ENCODE measurements at regions of chr21 and their contacts with region 1.

Region 1: GRCh38 chr21:39388038-39388810 is 39.3 kb upstream of the HMGN1 start:
- DNase-seq: peak; percentile 85
- ATAC-seq: peak; percentile 92
- H3K4me3 ChIP-seq: peak overlapping the region; percentile 70
- H3K27ac ChIP-seq: no peak overlapping the region
- H3K4me1 ChIP-seq: peaks cover 9% of the 10 kb centered on the region
- H3K27me3 ChIP-seq: no peaks in the 10 kb centered on the region
- CTCF ChIP-seq: peak; percentile 94

Region 2: DNA sequence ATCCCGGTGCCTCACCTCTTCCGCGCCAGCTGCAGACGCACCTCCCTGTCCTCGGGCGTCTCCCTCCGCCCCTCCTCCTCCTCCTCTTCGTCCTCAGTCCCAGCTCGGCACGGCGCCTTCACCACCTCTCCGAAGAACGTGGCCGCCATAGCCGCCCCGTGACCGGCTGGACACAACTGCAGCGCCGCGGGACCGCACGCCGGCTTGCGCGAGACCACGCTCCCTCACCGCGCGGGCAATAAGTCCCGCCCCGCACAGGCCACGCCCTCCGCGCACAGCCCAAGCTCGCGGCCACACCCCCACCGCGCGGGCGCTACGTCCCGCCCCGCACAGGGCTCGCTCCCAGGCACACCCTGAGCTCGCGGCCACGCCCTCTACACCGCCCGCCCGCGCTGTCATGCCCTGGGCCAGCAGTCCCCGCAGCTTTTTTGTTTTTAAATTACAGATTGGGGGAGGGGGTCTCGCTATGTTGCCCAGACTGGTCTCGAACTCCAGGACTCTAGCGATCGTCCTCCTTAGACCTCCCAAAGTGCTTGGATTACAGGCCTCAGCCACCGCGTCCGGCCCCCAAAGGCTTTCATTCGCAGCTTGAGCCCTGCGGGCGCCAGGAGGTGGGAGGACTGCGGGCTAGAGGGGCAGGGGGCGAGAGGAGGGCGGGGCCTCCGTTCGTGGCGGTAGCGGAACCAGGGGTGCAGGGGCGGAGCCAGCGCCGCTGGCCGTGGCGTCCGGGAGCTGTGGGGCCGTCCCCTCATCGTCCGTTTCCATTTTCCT is 204.8 kb before region 1 on chr21 and contains the start of gene PSMG1:
- CTCF ChIA-PET with region 1: no interaction called
- POLR2A ChIA-PET with region 1: no interaction called
- intact Hi-C with region 1: loop called (anchors 10 kb)
- DNase-seq: peak; percentile 96
- ATAC-seq: peak; percentile 89
- H3K4me3 ChIP-seq: peak within 1 kb of the TSS; percentile 85
- H3K27ac ChIP-seq: peak within 1 kb of the TSS; percentile 44
- H3K4me1 ChIP-seq: peaks cover 18% of the 10 kb centered on the region
- H3K27me3 ChIP-seq: no peaks in the 10 kb centered on the region
- CTCF ChIP-seq: no peak
- total RNA-seq, gene PSMG1: 110 and 113 TPM in 2 replicates

Region 3: DNA sequence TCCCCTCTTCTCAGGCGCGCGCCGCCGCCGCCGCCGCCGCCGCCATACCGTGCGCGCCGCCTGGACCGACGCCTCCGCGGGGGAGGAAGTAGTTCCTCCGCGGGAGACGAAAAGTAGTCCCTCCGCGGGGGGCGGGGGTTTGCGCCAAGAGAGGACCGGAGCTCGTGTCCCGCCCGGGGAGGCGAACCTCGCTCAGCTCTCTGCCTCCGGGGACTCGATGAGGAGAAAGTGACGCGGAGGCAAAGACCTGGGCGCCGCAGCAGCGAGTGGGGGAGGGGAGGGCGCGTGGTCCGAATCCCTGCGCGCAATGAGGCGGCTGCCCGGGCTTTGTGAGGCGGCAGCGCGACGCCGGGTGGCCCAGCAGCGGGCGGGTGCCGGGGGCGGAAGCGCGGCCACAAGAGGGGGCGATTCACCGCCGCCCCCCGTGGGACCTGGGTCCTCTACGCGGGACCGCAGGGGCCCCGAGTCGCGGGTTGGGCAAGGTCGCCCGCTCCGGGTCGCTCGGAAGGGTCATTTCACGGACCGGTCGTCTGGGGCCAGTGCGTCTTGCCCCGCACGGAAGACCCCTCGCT is 74.6 kb before region 1 on chr21 and contains the start of gene BRWD1:
- CTCF ChIA-PET with region 1: no interaction called
- POLR2A ChIA-PET with region 1: no interaction called
- intact Hi-C with region 1: loop called (anchors 2 kb)
- DNase-seq: peak; percentile 77
- ATAC-seq: peak; percentile 55
- H3K4me3 ChIP-seq: peak within 1 kb of the TSS; percentile 77
- H3K27ac ChIP-seq: peak within 1 kb of the TSS; percentile 71
- H3K4me1 ChIP-seq: peaks cover 20% of the 10 kb centered on the region
- H3K27me3 ChIP-seq: no peaks in the 10 kb centered on the region
- CTCF ChIP-seq: no peak
- total RNA-seq, gene BRWD1: 25.1 and 29.3 TPM in 2 replicates

Region 4: GRCh38 chr21:39373644-39374043 is 14.6 kb before region 1 on chr21:
- CTCF ChIA-PET with region 1: interaction called, 20 read pairs
- POLR2A ChIA-PET with region 1: interaction called, 3 read pairs
- intact Hi-C with region 1: loop called (anchors 1 kb)
- DNase-seq: peak; percentile 73
- ATAC-seq: peak; percentile 96
- H3K4me3 ChIP-seq: peak overlapping the region; percentile 31; the same call in 1 of the 2 replicates
- H3K27ac ChIP-seq: no peak overlapping the region
- H3K4me1 ChIP-seq: peaks cover 7% of the 10 kb centered on the region; the same call in 1 of the 2 replicates
- H3K27me3 ChIP-seq: no peaks in the 10 kb centered on the region
- CTCF ChIP-seq: peak; percentile 67

Region 5: GRCh38 chr21:39406065-39406464 is 17.8 kb after region 1 on chr21:
- CTCF ChIA-PET with region 1: interaction called, 14 read pairs
- POLR2A ChIA-PET with region 1: no interaction called
- intact Hi-C with region 1: no loop called
- DNase-seq: no peak
- ATAC-seq: no peak
- H3K4me3 ChIP-seq: no peak overlapping the region
- H3K27ac ChIP-seq: no peak overlapping the region
- H3K4me1 ChIP-seq: no peaks in the 10 kb centered on the region
- H3K27me3 ChIP-seq: no peaks in the 10 kb centered on the region
- CTCF ChIP-seq: no peak

Region 6: DNA sequence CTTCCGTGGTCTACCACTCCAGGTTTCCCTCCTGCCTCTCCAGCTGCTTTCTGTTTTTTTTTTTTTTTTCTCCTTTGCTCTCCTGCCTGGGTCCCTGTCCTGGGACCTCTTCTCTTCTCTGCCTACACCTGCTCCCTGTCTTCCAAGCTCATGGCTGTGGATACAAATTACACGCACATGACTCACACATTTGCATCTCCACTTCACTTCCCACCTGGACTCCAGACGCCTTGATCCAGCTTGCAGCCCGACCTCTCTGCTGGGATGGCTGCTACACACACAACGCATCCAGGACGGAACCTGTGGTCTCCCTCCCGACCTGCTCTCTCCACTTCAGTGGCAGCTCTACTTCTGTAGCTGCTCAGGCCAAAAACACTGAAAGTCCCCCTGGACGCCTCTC is 180.1 kb after region 1 on chr21:
- CTCF ChIA-PET with region 1: no interaction called
- POLR2A ChIA-PET with region 1: no interaction called
- intact Hi-C with region 1: no loop called
- DNase-seq: no peak
- ATAC-seq: no peak
- H3K4me3 ChIP-seq: no peak overlapping the region
- H3K27ac ChIP-seq: no peak overlapping the region
- H3K4me1 ChIP-seq: no peaks in the 10 kb centered on the region
- H3K27me3 ChIP-seq: peaks cover 25% of the 10 kb centered on the region
- CTCF ChIP-seq: no peak